Tibial artery (tissue), 4 donors: ENCODE measurements at regions of chr4 and their contacts with region 1.

Region 1: GRCh38 chr4:26459054-26459755 is 31.1 kb downstream of the CCKAR start:
- DNase-seq: no peak
- H3K4me3 ChIP-seq: no peak overlapping the region
- H3K27ac ChIP-seq: no peak overlapping the region
- H3K4me1 ChIP-seq: no peaks in the 10 kb centered on the region
- H3K27me3 ChIP-seq: no peaks in the 10 kb centered on the region
- CTCF ChIP-seq: peak; percentile 42 to 44

Region 2: GRCh38 chr4:26330186-26330787 is 128.9 kb before region 1 on chr4:
- intact Hi-C with region 1: no loop called
- DNase-seq: no peak
- H3K4me3 ChIP-seq: no peak overlapping the region
- H3K27ac ChIP-seq: no peak overlapping the region
- H3K4me1 ChIP-seq: peaks cover 0 to 7% (median 2%) of the 10 kb centered on the region in 4 donors
- H3K27me3 ChIP-seq: no peaks in the 10 kb centered on the region
- CTCF ChIP-seq: peak; percentile 70

Region 3: GRCh38 chr4:26885912-26886274 is 426.7 kb after region 1 on chr4:
- intact Hi-C with region 1: loop called (anchors 10 kb)
- DNase-seq: no peak
- H3K4me3 ChIP-seq: no peak overlapping the region
- H3K27ac ChIP-seq: no peak overlapping the region
- H3K4me1 ChIP-seq: no peaks in the 10 kb centered on the region
- H3K27me3 ChIP-seq: no peaks in the 10 kb centered on the region
- CTCF ChIP-seq: no peak

Region 4: GRCh38 chr4:27010334-27010940 is 551.2 kb after region 1 on chr4:
- intact Hi-C with region 1: loop called (anchors 10 kb)
- DNase-seq: peak; percentile 57 to 73
- H3K4me3 ChIP-seq: no peak overlapping the region
- H3K27ac ChIP-seq: no peak overlapping the region
- H3K4me1 ChIP-seq: peaks cover 0 to 13% (median 0%) of the 10 kb centered on the region in 4 donors
- H3K27me3 ChIP-seq: no peaks in the 10 kb centered on the region
- CTCF ChIP-seq: peak; percentile 78 to 94